ENCODE measurements at regions of chr4 and their contacts with region 1.

Region 1: DNA sequence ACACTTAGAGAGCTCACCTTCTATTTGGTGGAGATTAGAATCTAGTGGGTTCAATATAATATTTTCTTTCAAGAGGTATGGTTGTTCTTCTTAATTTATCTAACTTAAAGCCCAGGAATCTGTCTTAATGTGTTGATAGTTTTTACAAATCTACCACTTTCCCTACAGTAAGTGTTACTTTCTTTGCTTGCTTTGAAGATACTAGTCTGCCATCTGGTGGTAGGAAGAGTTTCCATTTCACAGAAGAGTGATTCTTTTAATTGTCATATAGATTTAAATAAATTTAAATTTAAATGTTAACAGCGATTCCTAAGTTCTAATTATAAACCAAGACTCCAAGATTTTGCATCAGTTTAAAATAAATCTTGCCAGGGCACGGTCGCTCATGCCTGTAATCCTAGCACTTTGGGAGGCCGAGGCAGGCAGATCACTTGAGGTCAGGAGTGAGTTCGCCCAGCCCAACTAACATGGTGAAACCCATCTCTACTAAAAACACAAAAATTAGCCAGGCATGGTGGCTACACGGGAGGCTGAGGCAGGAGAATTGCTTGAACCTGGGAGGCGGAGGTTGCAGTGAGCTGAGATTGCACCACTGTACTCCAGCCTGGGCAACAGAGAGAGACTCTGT is 43.5 kb downstream of the NUDT9 start:
- DNase-seq: peak; percentile 32 to 44 (median 43)
- H3K4me3 ChIP-seq: no peak overlapping the region
- H3K4me3 Mint-ChIP-seq: no peak overlapping the region
- H3K27ac ChIP-seq: no peak overlapping the region
- H3K27ac Mint-ChIP-seq: no peak overlapping the region
- H3K4me1 ChIP-seq: no peaks in the 10 kb centered on the region
- H3K4me1 Mint-ChIP-seq: peaks cover 0 to 2% (median 0%) of the 10 kb centered on the region in 4 donors
- H3K27me3 ChIP-seq: no peaks in the 10 kb centered on the region
- H3K27me3 Mint-ChIP-seq: no peaks in the 10 kb centered on the region

Region 2: GRCh38 chr4:87235020-87235671 is 230.7 kb before region 1 on chr4:
- CTCF ChIA-PET with region 1: interaction called, 3 read pairs
- POLR2A ChIA-PET with region 1: no interaction called
- intact Hi-C with region 1: loop called (anchors 2 kb)
- DNase-seq: no peak
- H3K4me3 ChIP-seq: peak overlapping the region in 1 of 2 donors; percentile 47
- H3K4me3 Mint-ChIP-seq: peak overlapping the region in 6 of 8 donors; percentile 80 to 92 (median 84)
- H3K27ac ChIP-seq: no peak overlapping the region
- H3K27ac Mint-ChIP-seq: peak overlapping the region in 2 of 7 donors; percentile 1 to 50
- H3K4me1 ChIP-seq: peaks cover 5% of the 10 kb centered on the region
- H3K4me1 Mint-ChIP-seq: peaks cover 0 to 7% (median under 1%) of the 10 kb centered on the region in 4 donors
- H3K27me3 ChIP-seq: peaks cover 4% of the 10 kb centered on the region
- H3K27me3 Mint-ChIP-seq: peaks cover 2 to 6% of the 10 kb centered on the region in 2 donors

Region 3: DNA sequence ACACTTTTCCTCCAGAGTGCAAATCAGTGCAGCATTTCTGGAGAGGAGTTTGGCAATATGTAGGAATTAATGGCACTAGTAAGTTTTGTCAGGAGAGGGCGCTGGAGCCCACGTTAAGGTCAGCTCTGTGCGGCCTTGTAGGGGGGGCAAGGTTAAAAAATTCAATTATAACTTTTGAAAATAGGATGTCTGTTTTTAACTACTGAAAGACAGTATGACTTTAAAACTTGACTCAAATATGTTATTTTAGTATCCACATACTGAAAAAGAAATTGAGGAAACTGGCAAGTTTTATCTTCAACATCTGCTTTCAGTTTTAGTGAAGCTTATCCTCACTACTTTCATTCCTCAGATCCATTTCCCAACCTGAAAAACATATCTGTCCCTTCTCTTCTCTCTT is 112.3 kb before region 1 on chr4:
- CTCF ChIA-PET with region 1: interaction called, 9 read pairs
- POLR2A ChIA-PET with region 1: no interaction called
- intact Hi-C with region 1: loop called (anchors 5 kb)
- DNase-seq: peak in 4 of 5 donors; percentile 5 to 21 (median 18)
- H3K4me3 ChIP-seq: no peak overlapping the region
- H3K4me3 Mint-ChIP-seq: no peak overlapping the region
- H3K27ac ChIP-seq: no peak overlapping the region
- H3K27ac Mint-ChIP-seq: no peak overlapping the region
- H3K4me1 ChIP-seq: no peaks in the 10 kb centered on the region
- H3K4me1 Mint-ChIP-seq: no peaks in the 10 kb centered on the region
- H3K27me3 ChIP-seq: no peaks in the 10 kb centered on the region
- H3K27me3 Mint-ChIP-seq: no peaks in the 10 kb centered on the region

Region 4: DNA sequence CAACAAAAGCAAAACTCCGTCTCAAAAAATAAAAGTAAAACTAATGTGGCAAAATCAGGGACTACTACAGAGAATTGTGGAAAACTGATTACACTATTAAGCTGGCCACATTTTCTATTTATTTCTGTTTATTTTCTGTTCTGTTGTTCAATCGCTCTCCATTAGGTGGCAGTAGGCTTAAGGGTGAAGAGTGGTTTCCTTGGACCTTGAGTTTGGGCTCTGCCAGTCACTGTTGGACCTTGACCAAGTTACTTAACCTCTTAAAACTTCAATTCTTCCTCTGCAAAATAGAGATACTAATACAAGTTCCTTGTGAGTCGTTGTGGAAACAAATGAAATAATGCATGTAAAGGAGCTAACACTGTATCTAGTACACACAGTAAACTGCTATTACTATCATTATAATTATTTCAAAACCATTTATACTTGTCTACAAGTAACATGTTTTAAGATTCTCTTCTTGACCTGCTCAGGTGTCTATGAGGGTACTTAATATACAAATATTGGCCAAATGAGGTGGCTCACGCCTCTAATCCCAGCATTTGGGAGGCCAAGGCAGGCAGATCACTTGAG is 90.0 kb before region 1 on chr4:
- CTCF ChIA-PET with region 1: interaction called, 266 read pairs
- POLR2A ChIA-PET with region 1: no interaction called
- intact Hi-C with region 1: loop called (anchors 1 kb)
- DNase-seq: peak in 3 of 5 donors; percentile 25 to 29 (median 28)
- H3K4me3 ChIP-seq: no peak overlapping the region
- H3K4me3 Mint-ChIP-seq: no peak overlapping the region
- H3K27ac ChIP-seq: no peak overlapping the region
- H3K27ac Mint-ChIP-seq: no peak overlapping the region
- H3K4me1 ChIP-seq: no peaks in the 10 kb centered on the region
- H3K4me1 Mint-ChIP-seq: peaks cover 3 to 5% (median 4%) of the 10 kb centered on the region in 4 donors
- H3K27me3 ChIP-seq: no peaks in the 10 kb centered on the region
- H3K27me3 Mint-ChIP-seq: no peaks in the 10 kb centered on the region